ENCODE measurements at regions of chr11 and their contacts with region 1.

Region 1: DNA sequence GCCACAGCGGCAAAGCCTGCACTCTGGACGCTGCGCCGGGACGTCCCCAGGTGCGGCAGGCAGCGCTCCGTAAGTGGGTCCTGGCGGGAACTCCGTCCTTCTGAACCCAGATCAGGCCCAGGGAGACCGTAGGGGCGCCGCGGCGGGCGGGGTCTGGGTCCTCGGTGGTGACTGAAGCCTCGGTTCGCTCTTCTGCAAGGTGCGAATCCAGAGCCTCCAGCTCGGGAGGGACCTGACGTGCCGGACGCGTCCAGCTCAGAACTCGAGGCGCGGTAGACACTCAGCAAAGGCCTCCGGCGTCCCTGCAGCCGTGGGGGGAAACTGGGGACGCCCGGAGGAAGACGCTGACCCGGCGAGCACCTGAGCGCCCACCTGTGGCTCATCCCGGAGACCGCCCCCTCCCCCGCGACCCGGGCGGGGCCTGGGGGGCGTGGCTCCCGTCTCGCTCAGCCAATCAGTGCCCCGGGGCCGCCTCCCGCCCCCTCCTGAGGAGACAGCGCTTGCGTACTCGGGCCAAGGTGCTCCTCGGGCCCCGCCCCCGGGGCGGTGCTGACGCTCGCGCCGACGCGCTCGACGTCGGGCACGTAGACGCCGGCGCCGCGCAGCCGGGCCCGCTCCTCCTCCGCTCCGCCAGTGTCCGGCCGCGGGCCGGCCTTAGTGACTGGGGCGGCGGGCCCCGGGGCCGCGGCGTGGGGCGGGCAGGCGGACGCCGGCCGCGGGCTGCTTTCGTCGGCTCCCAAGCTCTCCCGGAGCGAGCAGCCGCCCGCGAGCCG is at the start of gene PPFIA1:
- DNase-seq: peak; percentile 98
- total RNA-seq, gene PPFIA1: 42.8 TPM

Region 2: GRCh38 chr11:70202898-70203748 is 67.2 kb before region 1 on chr11 and contains the start of gene FADD:
- intact Hi-C with region 1: loop called (anchors 10 kb)
- DNase-seq: peak; percentile 95
- total RNA-seq, gene FADD: 8.6 TPM

Region 3: DNA sequence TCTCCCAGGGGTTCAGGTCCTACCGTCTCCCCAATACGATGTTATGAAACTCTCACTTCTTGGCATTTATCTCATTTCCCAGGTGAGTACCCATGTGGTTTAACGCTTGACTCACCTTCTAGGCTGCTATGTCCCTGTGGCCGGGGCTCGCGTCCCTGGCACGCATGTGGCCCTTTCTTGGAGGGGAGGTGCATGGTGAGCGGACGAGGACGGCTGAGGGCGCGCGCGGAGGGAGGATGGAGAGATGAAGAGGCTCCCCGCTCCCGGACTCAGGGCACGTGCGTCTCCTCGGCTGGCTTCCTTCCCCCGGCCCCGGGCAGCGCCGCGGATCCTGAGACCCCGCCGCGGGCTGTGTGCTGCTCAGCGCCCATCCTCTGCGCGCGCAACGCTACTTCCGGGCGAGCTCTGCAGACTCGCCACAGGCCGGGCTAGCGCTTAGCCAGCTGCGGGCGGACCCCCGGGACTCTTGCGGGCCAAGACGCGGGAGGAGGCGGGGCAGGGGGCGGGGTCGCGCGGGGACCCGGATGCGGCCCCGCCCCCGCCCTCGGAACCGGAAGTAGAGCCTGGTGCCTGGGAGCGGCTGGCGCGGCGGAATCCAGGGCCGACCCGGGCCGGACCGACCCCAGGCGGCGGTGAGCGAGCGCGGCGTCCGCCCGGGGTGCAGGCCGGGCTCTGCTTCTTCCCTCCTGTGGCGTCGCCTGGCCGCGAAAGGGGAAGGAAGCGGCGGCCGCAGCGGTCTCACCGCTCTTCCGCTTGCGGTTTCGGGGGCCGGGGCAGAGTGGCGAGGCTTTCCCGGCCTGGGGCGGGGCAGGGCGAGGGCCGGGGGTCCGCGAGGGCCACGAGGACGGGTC is 127.9 kb after region 1 on chr11 and contains the start of gene CTTN:
- intact Hi-C with region 1: loop called (anchors 5 kb)
- DNase-seq: peak; percentile 89
- total RNA-seq, gene CTTN: 171 TPM